ENCODE measurements at regions of chr12 and their contacts with region 1.

Region 1: DNA sequence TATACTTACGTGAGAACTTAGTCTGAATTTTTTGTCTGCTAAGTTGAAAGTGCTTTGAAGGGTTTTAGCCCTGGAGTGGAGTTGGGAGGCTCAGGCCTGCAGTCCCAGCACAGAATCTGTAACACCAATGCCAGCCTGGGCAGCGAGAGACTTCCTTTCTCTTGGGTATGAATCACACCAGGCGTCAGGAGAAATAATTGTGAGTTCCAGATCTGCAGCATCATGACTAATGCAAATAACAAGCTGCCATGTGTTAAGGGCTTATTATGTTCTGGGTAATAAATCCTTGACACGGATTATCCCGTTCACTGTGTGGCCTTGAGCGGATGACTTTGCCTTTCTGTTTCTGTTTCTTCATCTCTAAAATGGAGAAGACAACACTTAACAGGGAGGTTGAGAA is 70.6 kb downstream of the B4GALNT3 start:
- DNase-seq: no peak
- H3K4me3 ChIP-seq: no peak overlapping the region
- H3K27me3 ChIP-seq: peaks cover 5% of the 10 kb centered on the region; the same call in 1 of the 2 replicates
- CTCF ChIP-seq: no peak

Region 2: DNA sequence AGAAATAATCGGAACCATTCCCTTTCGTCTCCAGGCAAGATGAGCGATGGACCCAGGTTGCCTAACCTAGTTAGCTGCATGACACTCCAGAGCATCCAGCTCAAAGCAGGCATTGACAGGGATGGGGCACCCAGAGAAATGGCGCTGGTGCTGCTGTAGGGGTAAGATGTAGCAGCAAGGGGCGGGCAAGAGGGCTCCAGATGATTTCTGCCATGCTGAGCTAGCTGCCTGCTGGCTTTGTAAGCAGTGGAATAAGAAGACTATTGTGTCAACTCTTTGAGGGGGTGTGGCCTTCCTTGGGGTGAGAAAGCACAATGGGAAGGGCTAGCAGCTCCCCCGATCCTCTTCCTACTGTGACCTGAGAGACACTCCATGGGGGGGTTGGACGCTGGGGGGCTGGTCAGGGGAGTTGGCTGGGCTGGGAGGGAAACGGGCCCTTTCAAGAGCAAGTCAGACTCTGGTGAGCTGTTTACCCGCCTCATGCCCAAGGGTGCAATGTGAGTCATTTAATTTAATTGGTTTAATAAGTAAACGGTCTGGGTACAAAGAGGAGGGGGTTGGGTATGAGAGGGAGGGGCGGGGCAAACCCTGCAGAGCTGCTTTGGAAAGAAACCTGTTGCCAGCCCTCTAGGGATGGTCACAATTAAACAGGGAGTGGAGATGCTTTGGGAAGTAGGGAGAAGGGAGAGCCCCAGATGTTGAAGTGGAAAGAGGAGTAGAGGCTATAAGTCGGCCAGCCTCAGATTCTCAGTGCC is 20.1 kb before region 1 on chr12:
- CTCF ChIA-PET with region 1: no interaction called
- POLR2A ChIA-PET with region 1: interaction called, 11 read pairs
- DNase-seq: no peak
- H3K4me3 ChIP-seq: no peak overlapping the region
- H3K27me3 ChIP-seq: no peaks in the 10 kb centered on the region
- CTCF ChIP-seq: no peak

Region 3: DNA sequence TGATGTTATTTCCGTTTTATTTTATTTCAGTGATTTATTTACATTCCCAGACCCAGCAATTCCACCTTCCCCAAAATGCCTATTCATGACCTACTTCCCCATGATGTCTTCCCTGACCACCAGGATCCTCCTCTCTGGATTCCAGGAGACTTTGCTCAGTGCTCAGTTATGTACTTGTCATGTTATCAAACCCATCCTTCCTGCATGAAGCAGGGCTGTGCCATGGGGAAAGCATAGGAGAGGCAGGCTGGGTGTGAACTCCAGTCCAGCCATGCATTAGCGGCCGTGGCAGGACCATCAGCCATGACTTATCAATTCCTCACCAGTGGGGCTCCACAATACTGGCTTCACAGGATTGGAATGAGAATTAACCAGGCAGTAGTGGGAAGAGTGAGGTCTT is 12.8 kb before region 1 on chr12:
- CTCF ChIA-PET with region 1: interaction called, 10 read pairs
- POLR2A ChIA-PET with region 1: no interaction called
- DNase-seq: no peak
- H3K4me3 ChIP-seq: no peak overlapping the region
- H3K27me3 ChIP-seq: peaks cover 8% of the 10 kb centered on the region
- CTCF ChIP-seq: no peak